ENCODE measurements at regions of chr20 and their contacts with region 1.

Region 1: DNA sequence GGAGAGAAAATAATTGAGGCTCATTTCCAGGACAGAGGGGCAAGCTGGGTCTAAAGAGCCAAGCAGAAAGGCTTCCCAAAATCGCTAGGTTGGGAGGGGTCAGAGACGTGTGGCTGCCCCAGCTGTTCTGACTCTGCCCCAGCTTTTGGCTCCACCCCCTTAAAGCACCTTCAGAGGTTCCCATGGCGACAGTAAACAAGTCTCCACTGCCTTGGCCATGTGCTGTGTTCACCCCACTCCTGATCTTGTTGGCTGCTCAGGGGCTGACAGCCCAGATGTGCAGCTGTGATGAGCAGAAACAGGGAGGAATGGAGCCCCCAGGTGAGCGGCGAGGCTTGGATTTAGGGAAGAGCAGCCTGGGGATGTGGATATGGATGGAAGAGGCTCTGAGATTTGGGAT is 72.7 kb upstream of the SPTLC3 start:
- DNase-seq: no peak
- H3K4me3 ChIP-seq: no peak overlapping the region
- H3K27ac ChIP-seq: no peak overlapping the region
- H3K4me1 ChIP-seq: no peaks in the 10 kb centered on the region
- H3K27me3 ChIP-seq: no peaks in the 10 kb centered on the region
- CTCF ChIP-seq: no peak

Region 2: GRCh38 chr20:12777016-12777415 is 159.0 kb before region 1 on chr20:
- CTCF ChIA-PET with region 1: no interaction called
- POLR2A ChIA-PET with region 1: no interaction called
- intact Hi-C with region 1: no loop called
- DNase-seq: no peak
- H3K4me3 ChIP-seq: no peak overlapping the region
- H3K27ac ChIP-seq: no peak overlapping the region
- H3K4me1 ChIP-seq: no peaks in the 10 kb centered on the region
- H3K27me3 ChIP-seq: no peaks in the 10 kb centered on the region
- CTCF ChIP-seq: no peak

Region 3: GRCh38 chr20:12949429-12949980 is 13.5 kb after region 1 on chr20:
- CTCF ChIA-PET with region 1: no interaction called
- POLR2A ChIA-PET with region 1: interaction called, 11 read pairs
- intact Hi-C with region 1: no loop called
- DNase-seq: no peak
- H3K4me3 ChIP-seq: no peak overlapping the region
- H3K27ac ChIP-seq: no peak overlapping the region
- H3K4me1 ChIP-seq: no peaks in the 10 kb centered on the region
- H3K27me3 ChIP-seq: no peaks in the 10 kb centered on the region
- CTCF ChIP-seq: no peak